ENCODE measurements at regions of chr13 and their contacts with region 1.

Region 1: GRCh38 chr13:48412881-48413351 is at the start of gene LPAR6:
- DNase-seq: no peak
- H3K4me3 ChIP-seq: peak within 1 kb of the TSS in 2 of 3 donors; percentile 27 to 28
- H3K27ac ChIP-seq: peak within 1 kb of the TSS; percentile 51 to 90 (median 77)
- H3K4me1 ChIP-seq: peaks cover 17 to 18% of the 10 kb centered on the region in 2 donors
- H3K27me3 ChIP-seq: no peaks in the 10 kb centered on the region
- CTCF ChIP-seq: no peak
- POLR2A ChIP-seq: peak in 1 of 2 donors; percentile 83
- total RNA-seq, gene LPAR6: 16.8 to 42.5 (median 23.4) TPM

Region 2: DNA sequence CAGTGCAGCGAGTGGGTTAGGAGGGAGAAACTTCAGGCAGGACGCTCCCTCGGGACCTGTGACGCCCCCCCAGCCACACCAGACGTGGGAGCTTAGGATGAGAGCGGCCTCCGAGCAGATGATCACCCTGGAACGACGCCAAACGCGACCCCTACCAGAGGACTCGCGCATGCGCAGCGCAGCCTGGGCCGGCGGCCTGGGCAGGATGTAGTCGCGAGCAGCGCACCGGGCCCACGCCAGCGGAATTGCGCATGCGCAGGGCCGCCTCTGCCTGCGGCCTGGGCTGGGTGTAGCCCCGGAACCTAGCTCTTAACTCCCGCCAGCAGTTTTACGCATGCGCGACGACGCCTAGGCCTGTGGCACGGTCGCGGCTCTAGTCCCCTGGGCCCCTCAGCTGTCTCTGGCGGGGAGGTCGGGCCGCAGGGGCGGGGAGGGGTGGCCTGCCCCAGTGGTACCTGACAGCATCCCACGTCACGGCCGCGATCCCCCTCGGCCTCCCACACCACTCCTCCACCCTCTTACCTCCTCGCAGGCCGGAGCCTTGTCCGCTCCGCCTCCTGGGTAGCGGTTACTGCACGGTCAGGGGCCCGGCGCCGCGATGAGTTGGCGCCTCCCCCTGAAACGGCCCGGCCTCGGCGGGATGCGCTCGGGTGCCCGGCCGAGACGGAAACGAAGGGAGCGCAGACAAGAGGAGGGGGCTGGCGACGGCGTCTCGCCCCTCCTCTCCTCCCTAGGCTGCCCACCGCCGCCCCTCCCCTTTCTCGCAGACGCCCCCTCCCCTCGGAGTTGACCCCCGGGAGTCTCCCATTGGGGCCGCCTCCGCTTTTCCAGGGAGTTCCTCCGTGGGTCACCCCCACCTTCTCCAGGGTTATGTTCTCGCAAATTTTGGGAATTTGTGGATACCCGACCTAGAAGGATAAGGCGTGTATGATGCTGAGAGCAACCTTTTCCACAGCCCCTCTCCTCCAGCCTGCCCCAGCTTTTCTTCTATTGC is 119.9 kb after region 1 on chr13 and contains the start of gene RCBTB2:
- intact Hi-C with region 1: loop called (anchors 10 kb)
- DNase-seq: peak; percentile 98
- H3K4me3 ChIP-seq: peak within 1 kb of the TSS; percentile 49 to 55 (median 51)
- H3K27ac ChIP-seq: peak within 1 kb of the TSS; percentile 89 to 97 (median 96)
- H3K4me1 ChIP-seq: peaks cover 4% of the 10 kb centered on the region in 2 donors
- H3K27me3 ChIP-seq: no peaks in the 10 kb centered on the region
- CTCF ChIP-seq: peak in 1 of 6 experiments; percentile 5
- POLR2A ChIP-seq: peak; percentile 19 to 90
- total RNA-seq, gene RCBTB2: 29.1 to 49.6 (median 34.9) TPM

Measured in thyroid gland (tissue), 4 donors.